ENCODE measurements at regions of chr1 and their contacts with region 1.

Region 1: DNA sequence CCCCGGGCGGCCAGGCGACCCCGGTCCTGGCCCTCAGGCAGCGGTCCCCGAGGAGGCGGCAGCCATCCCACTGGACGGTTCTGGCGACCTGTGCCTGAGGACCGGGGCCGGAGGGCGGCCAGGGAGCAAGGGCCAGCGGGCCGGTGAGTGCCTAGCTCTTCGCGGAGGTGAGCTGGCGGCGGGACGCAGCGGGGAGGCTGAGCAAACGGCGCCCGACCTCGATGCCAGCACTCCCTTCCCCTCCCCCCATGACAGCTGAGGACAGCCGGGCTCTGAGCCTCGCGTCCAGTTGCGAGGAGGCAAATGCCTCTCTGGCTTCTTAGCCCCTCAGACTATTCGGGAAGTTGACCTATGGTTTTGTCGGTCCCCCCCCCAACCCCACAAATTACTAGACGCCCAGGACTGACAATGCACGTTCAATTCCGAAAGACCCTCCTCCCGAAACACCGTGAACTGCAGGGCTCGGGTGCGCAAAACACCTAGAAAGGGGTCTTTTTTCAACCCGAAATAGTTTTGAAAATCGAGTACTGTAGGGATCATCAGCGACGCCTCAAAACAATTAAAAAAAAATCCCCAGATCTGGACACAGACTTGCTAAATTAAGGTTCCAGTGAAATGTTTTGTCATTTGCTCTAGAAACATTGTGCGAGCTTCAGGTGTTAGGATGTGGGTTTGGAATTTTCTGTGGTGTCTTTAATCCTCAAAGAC is 8.3 kb downstream of the CDKN2C start:
- DNase-seq: peak in 14 of 35 experiments; percentile 1 to 53 (median 12)
- ATAC-seq: peak; percentile 29 to 56 (median 53)
- H3K4me3 ChIP-seq: peak overlapping the region; percentile 81 to 83
- H3K4me3 Mint-ChIP-seq: peak overlapping the region; percentile 82 to 85 (median 83)
- H3K27ac ChIP-seq: peak overlapping the region; percentile 26
- H3K27ac Mint-ChIP-seq: peak overlapping the region; percentile 80 to 88
- H3K4me1 ChIP-seq: peaks cover 8 to 25% of the 10 kb centered on the region in 2 experiments
- H3K4me1 Mint-ChIP-seq: peaks cover 20 to 33% (median 22%) of the 10 kb centered on the region in 3 donors
- H3K27me3 ChIP-seq: peaks cover 14 to 27% of the 10 kb centered on the region in 2 experiments
- H3K27me3 Mint-ChIP-seq: peaks cover 0 to 34% of the 10 kb centered on the region in 2 donors

Region 2: DNA sequence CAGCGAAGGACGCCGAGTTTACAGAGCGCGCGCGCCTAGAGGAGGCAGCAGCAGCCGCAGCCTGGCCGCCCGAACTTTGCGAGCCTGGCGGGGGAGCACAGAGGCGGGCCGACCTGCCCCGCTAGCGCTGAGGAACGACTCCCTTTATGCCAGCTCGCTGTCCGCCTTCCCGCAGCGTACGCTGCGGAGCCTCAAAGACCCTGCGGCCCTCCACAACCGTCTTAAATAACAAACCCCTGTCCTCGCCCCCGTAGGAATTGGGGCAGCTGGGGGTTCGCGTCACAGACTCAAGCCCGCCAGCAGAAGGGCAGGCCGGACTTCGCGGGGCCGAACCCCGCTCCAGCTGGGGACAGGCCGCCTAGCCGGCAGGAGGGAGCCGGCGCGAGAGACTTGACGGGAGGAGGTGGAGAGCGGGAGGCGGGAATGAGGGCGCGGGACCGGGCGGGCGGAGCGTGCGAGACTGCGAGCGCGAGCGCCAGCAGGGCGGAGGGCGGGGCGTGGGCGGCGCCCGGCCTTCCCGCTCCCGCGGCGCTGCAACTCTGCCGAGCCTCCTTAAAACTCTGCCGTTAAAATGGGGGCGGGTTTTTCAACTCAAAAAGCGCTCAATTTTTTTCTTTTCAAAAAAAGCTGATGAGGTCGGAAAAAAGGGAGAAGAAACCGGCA is 10.0 kb before region 1 on chr1:
- CTCF ChIA-PET with region 1: interaction called in 1 of 2 experiments, 18 read pairs
- POLR2A ChIA-PET with region 1: interaction called in 1 of 2 experiments, 5 read pairs
- DNase-seq: peak; percentile 64 to 91 (median 74)
- ATAC-seq: peak; percentile 83 to 90 (median 87)
- H3K4me3 ChIP-seq: peak overlapping the region; percentile 98 to 100
- H3K4me3 Mint-ChIP-seq: peak overlapping the region; percentile 96 to 98 (median 98)
- H3K27ac ChIP-seq: peak overlapping the region; percentile 89
- H3K27ac Mint-ChIP-seq: peak overlapping the region; percentile 87 to 91
- H3K4me1 ChIP-seq: peaks cover 8 to 13% of the 10 kb centered on the region in 2 experiments
- H3K4me1 Mint-ChIP-seq: peaks cover 25 to 31% (median 27%) of the 10 kb centered on the region in 3 donors
- H3K27me3 ChIP-seq: no peaks in the 10 kb centered on the region
- H3K27me3 Mint-ChIP-seq: no peaks in the 10 kb centered on the region

Measured in T-cell (primary cell).